ENCODE measurements at regions of chr2 and their contacts with region 1.

Region 1: GRCh38 chr2:151238527-151239487 is 22.9 kb downstream of the RBM43 start:
- DNase-seq: peak; percentile 34
- H3K4me3 ChIP-seq: no peak overlapping the region
- H3K27ac ChIP-seq: no peak overlapping the region
- H3K4me1 ChIP-seq: no peaks in the 10 kb centered on the region
- H3K27me3 ChIP-seq: no peaks in the 10 kb centered on the region
- CTCF ChIP-seq: peak; percentile 52 to 83 (median 68)
- POLR2A ChIP-seq: no peak

Region 2: DNA sequence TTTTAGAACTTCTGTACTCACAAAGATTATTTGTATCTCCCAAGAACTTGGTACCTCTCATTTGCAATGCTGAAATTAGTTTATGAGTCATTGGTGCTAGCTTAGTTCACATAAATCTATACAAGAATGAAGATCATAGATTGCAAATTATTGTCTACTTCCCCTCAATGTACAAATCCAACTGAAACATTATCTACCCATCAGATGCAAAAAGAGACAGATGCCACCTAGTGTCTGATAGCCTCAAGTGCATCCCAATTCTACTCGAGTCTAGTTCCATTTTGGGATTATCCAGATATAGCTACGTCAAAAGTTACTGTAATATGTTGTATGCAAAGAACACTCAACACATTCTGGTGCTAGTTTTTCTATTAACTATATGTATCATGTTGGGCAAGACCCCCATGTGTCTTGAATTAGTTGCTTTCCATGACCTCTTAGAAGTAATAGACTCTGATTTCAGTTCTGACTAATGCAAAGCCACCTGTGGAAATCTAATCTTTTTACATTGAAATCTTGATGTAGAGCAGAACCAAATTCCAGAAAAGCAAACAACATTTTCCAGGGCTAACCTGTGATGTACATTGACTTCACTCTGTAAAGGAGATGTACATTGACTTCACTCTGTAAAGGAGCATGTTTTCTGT is 187.1 kb before region 1 on chr2:
- intact Hi-C with region 1: loop called (anchors 5 kb)
- DNase-seq: peak; percentile 22
- H3K4me3 ChIP-seq: no peak overlapping the region
- H3K27ac ChIP-seq: no peak overlapping the region
- H3K4me1 ChIP-seq: no peaks in the 10 kb centered on the region
- H3K27me3 ChIP-seq: no peaks in the 10 kb centered on the region
- CTCF ChIP-seq: peak; percentile 20 to 77 (median 68)
- POLR2A ChIP-seq: no peak

Region 3: DNA sequence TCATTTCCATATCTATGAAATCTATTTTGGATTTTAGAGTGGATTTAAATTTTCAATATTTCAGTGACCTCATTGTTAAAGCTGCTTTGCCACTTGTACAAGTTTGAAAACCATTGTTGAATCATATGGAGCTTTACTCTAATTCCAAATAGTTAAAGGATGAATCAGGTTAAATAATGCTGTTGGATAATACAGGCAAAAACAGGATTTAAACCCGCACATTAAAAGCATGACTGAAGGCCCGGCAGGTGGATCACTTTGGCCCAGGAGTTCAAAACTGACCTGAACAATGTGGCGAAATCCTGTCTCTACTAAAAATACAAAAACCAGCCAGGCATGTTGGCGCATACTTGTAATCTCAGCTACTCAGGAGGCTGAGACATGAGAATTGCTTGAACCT is 239.2 kb after region 1 on chr2:
- intact Hi-C with region 1: no loop called
- DNase-seq: no peak
- H3K4me3 ChIP-seq: no peak overlapping the region
- H3K27ac ChIP-seq: no peak overlapping the region
- H3K4me1 ChIP-seq: no peaks in the 10 kb centered on the region
- H3K27me3 ChIP-seq: no peaks in the 10 kb centered on the region
- CTCF ChIP-seq: no peak
- POLR2A ChIP-seq: no peak